ENCODE measurements at regions of chr3 and their contacts with region 1.

Region 1: DNA sequence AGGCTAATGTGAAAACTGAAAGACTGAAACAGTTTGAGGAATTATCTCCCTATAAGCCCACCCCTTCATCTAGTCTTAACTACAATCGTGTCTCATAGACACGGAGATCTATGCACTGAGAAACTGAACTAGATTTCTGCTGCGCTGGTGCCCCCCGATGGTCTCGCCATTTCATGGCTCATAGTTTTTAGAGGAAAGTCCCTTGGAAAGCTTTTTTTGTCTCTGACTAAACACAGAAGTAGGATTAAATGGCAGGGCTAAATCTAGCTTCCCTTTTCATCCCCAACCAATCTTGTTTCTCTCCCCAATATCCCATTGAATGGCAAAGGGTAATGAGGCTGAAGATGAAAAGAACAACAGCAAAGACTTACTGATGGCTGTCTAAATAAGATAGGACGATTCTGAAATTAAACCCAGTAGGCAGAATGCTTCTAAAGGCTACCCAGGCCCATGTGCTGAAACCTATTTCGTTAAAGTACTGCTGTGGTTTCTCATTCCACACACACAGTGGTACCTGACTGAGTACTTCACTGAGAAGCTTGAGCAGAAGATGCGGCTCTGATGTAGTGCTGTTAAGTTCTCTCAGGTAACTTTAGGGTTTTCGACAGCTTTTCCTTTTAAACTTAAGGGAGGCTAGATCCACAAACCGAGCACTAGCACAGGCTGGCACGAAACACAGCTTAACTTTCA is 142.7 kb downstream of the GADL1 start:
- DNase-seq: no peak
- ATAC-seq: peak; percentile 3

Region 2: GRCh38 chr3:30012941-30013543 is 738.7 kb before region 1 on chr3:
- intact Hi-C with region 1: loop called (anchors 2 kb)
- DNase-seq: peak; percentile 49
- ATAC-seq: peak; percentile 57

Region 3: DNA sequence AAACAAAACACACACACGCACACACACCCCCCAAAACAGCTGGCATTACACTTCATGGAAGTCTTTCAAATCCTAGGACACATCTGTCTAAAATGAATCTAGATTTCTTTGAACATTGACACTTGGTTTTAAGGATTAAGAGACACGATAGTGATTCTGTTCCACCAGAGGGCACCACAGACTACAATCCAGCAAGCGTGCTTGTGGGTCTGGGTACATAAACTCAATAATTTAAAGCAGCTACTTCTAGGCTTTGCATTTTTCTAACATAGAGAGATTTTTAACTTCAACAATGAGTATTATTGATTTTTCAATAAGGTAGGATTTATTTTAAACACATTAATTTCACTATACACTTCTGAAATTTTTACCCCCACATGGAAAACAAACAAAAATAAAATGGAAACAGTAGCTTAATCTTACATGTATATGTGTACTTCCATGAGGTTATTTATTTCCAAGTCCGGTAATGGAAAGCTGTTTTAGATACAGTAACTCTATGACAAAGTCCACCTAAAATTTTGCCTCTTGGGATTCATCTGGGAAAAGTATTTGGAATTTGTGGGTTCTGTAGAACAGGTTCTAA is 709.4 kb before region 1 on chr3:
- intact Hi-C with region 1: loop called (anchors 1 kb)
- DNase-seq: no peak
- ATAC-seq: no peak

Region 4: DNA sequence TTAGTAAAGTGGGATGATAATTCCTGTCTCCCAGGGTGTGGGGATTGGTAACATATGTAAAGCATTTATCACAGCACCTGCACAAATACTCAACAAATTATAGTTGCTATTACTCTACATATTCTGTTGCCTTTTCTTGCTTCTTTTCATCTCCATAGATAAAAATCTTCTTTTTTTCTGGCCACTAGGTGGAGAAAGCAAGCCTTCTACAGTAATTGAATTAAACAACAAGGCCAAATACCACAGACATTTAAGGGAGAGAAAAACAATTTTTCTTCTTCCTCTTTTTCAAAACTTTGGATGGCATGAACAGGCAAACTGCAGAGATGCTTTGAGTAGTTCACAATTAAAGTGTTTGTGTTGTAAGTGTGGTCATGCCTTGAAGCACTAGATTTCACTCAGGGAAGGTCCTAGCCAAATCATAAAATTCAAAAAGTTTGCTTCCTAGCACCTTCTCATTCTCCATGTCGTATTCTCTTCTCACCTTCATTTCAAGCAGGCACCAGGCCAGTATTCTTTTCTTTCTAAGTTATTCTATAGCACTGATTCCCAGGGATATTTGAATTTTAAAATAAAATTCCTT is 638.8 kb before region 1 on chr3:
- intact Hi-C with region 1: loop called (anchors 5 kb)
- DNase-seq: no peak
- ATAC-seq: no peak

Region 5: GRCh38 chr3:30548600-30548999 is 203.2 kb before region 1 on chr3:
- intact Hi-C with region 1: no loop called
- DNase-seq: no peak
- ATAC-seq: no peak